ENCODE measurements at regions of chr5 and their contacts with region 1.

Region 1: DNA sequence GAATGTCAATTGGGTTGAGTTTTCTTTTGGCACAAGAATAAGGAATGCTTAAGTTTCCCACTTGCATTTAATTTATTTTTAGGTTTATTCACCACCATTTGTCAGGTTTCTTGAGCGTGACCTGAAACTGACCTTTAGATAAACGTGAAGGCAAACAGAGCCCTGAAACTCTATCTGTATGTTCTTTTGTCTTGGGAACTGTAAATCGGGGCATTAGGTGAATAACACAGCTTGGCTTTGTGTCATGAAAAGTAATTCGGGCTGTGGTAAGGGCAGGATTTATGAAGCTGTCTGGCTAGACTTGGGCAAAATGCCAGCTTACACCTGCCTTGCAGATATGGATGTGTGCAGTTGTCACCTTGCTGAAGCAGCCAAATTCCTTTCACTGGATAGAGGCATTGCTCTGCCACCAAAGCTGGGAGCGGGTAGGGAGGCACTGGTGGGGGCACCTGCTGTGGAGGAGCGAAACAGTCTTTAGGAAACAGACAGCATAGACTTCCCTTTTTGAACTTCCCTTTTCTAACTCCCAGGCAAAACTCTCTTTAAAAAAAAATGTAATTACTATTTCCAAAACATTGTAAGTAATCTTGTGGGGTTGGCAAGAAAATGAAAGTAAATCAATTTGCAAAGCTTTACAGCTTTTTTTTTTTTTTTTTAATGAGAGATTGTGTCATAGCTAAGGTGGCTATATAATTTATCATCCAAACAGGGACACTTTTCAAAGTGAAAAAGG is 545.2 kb downstream of the CSNK1G3 start:
- DNase-seq: peak; percentile 88
- ATAC-seq: peak; percentile 85
- H3K4me3 ChIP-seq: peak overlapping the region; percentile 30 to 57 (median 54)
- H3K4me3 Mint-ChIP-seq: peak overlapping the region; percentile 94
- H3K27ac ChIP-seq: peak overlapping the region; percentile 71 to 72
- H3K27ac Mint-ChIP-seq: peak overlapping the region; percentile 95
- H3K4me1 ChIP-seq: peaks cover 40 to 45% of the 10 kb centered on the region in 2 donors
- H3K4me1 Mint-ChIP-seq: peaks cover 56% of the 10 kb centered on the region
- H3K27me3 ChIP-seq: no peaks in the 10 kb centered on the region
- H3K27me3 Mint-ChIP-seq: no peaks in the 10 kb centered on the region
- CTCF ChIP-seq: no peak

Region 2: GRCh38 chr5:123795688-123796087 is 261.5 kb before region 1 on chr5:
- CTCF ChIA-PET with region 1: no interaction called
- POLR2A ChIA-PET with region 1: no interaction called
- intact Hi-C with region 1: no loop called
- DNase-seq: no peak
- ATAC-seq: no peak
- H3K4me3 ChIP-seq: no peak overlapping the region
- H3K4me3 Mint-ChIP-seq: no peak overlapping the region
- H3K27ac ChIP-seq: no peak overlapping the region
- H3K27ac Mint-ChIP-seq: no peak overlapping the region
- H3K4me1 ChIP-seq: no peaks in the 10 kb centered on the region
- H3K4me1 Mint-ChIP-seq: no peaks in the 10 kb centered on the region
- H3K27me3 ChIP-seq: no peaks in the 10 kb centered on the region
- H3K27me3 Mint-ChIP-seq: peaks cover 3% of the 10 kb centered on the region
- CTCF ChIP-seq: no peak

Region 3: GRCh38 chr5:124034963-124035362 is 22.2 kb before region 1 on chr5:
- CTCF ChIA-PET with region 1: interaction called, 4 read pairs
- POLR2A ChIA-PET with region 1: no interaction called
- intact Hi-C with region 1: loop called (anchors 1 kb)
- DNase-seq: peak; percentile 90
- ATAC-seq: peak; percentile 94
- H3K4me3 ChIP-seq: peak overlapping the region in 1 of 5 experiments; percentile 31
- H3K4me3 Mint-ChIP-seq: peak overlapping the region; percentile 69
- H3K27ac ChIP-seq: peak overlapping the region; percentile 45 to 71
- H3K27ac Mint-ChIP-seq: peak overlapping the region; percentile 59
- H3K4me1 ChIP-seq: peaks cover 22 to 33% of the 10 kb centered on the region in 2 donors
- H3K4me1 Mint-ChIP-seq: peaks cover 35% of the 10 kb centered on the region
- H3K27me3 ChIP-seq: no peaks in the 10 kb centered on the region
- H3K27me3 Mint-ChIP-seq: no peaks in the 10 kb centered on the region
- CTCF ChIP-seq: no peak

Region 4: GRCh38 chr5:124157320-124157719 is 100.2 kb after region 1 on chr5:
- CTCF ChIA-PET with region 1: no interaction called
- POLR2A ChIA-PET with region 1: no interaction called
- intact Hi-C with region 1: loop called (anchors 5 kb)
- DNase-seq: peak; percentile 64
- ATAC-seq: peak; percentile 49
- H3K4me3 ChIP-seq: peak overlapping the region; percentile 9 to 53 (median 41)
- H3K4me3 Mint-ChIP-seq: peak overlapping the region; percentile 90
- H3K27ac ChIP-seq: peak overlapping the region; percentile 42 to 75
- H3K27ac Mint-ChIP-seq: peak overlapping the region; percentile 91
- H3K4me1 ChIP-seq: peaks cover 32 to 36% of the 10 kb centered on the region in 2 donors
- H3K4me1 Mint-ChIP-seq: peaks cover 48% of the 10 kb centered on the region
- H3K27me3 ChIP-seq: no peaks in the 10 kb centered on the region
- H3K27me3 Mint-ChIP-seq: no peaks in the 10 kb centered on the region
- CTCF ChIP-seq: no peak

Region 5: DNA sequence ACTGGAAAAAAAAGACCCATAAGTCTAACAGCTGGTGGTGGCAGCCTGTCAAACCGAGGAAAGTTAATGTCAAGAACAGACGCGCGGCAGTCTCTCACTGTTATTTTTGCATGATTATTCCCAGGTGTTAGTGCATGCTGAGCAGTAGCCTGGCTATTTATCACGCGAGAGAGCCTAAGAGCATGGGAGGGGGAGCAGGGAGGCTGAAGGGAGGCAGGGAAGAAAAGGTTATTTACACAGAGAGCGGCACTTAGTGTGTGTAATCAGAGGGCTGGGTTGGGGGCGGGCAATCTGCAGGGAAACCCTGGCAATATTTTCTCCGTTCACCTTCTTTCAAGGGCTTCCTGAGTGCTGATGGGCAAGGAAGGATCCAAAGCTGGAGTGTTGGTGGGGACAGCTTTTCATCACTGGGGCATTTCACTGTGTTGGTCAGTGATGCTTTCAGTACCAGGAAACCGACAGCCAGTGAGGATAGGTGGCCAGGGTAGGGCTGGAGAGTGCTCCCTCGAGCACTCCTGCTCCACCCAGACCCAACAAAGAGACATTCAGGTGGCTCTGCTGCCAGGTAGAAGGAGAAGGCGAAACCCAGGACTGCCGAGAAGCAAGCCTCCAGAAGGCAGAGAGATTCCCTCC is 649.7 kb after region 1 on chr5:
- CTCF ChIA-PET with region 1: no interaction called
- POLR2A ChIA-PET with region 1: no interaction called
- intact Hi-C with region 1: loop called (anchors 5 kb)
- DNase-seq: peak; percentile 19
- ATAC-seq: no peak
- H3K4me3 ChIP-seq: peak overlapping the region in 2 of 5 experiments; percentile 24 to 30
- H3K4me3 Mint-ChIP-seq: peak overlapping the region; percentile 80
- H3K27ac ChIP-seq: peak overlapping the region; percentile 57 to 71
- H3K27ac Mint-ChIP-seq: peak overlapping the region; percentile 87
- H3K4me1 ChIP-seq: peaks cover 66 to 67% of the 10 kb centered on the region in 2 donors
- H3K4me1 Mint-ChIP-seq: peaks cover 82% of the 10 kb centered on the region
- H3K27me3 ChIP-seq: peaks cover 0 to 8% (median 0%) of the 10 kb centered on the region in 4 experiments
- H3K27me3 Mint-ChIP-seq: no peaks in the 10 kb centered on the region
- CTCF ChIP-seq: no peak